IMR-90 (cell line): ENCODE measurements at regions of chr14 and their contacts with region 1.

Region 1: GRCh38 chr14:60980811-60981632 is at the starts of genes SLC38A6 and TRMT5:
- DNase-seq: peak; percentile 97
- ATAC-seq: peak; percentile 95
- H3K4me3 ChIP-seq: peak within 1 kb of the TSS; percentile 83
- H3K27ac ChIP-seq: peak within 1 kb of the TSS; percentile 89
- H3K4me1 ChIP-seq: no peaks in the 10 kb centered on the region; the same call in 1 of the 2 replicates
- H3K27me3 ChIP-seq: no peaks in the 10 kb centered on the region
- CTCF ChIP-seq: no peak
- POLR2A ChIP-seq: peak; percentile 83
- RAD21 ChIP-seq: peak; percentile 28
- total RNA-seq, gene SLC38A6: 18.3 and 38.9 TPM in 2 replicates
- total RNA-seq, gene TRMT5: 10.4 and 15.6 TPM in 2 replicates

Region 2: DNA sequence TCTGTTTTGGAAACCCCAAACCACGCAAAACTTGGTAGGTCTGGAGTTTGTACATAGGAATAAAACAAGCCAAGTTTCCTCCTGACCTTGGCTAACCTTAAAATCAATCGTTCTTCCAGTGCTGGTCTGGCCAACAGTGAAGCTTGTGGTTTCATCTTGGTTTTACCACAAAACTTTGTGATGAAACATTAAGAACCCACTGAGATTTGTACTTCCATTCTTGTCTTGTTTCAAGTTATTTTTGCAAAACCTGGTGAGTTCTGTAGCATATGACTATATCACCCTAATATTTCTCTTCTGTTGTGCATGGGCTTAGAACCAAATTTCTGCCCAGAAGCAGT is 358.1 kb before region 1 on chr14:
- CTCF ChIA-PET with region 1: no interaction called
- POLR2A ChIA-PET with region 1: no interaction called
- dilution Hi-C with region 1: no loop called
- in situ Hi-C with region 1: loop called (anchors 25 kb)
- intact Hi-C with region 1: loop called (anchors 2 kb)
- DNase-seq: peak; percentile 70
- ATAC-seq: no peak
- H3K4me3 ChIP-seq: no peak overlapping the region
- H3K27ac ChIP-seq: peak overlapping the region; percentile 53; the same call in 1 of the 2 replicates
- H3K4me1 ChIP-seq: peaks cover 8% of the 10 kb centered on the region
- H3K27me3 ChIP-seq: no peaks in the 10 kb centered on the region
- CTCF ChIP-seq: no peak
- POLR2A ChIP-seq: no peak
- RAD21 ChIP-seq: no peak

Region 3: GRCh38 chr14:60724137-60724619 is 256.8 kb before region 1 on chr14 and contains the start of gene SIX4:
- CTCF ChIA-PET with region 1: interaction called, 3 read pairs
- POLR2A ChIA-PET with region 1: interaction called, 5 read pairs
- dilution Hi-C with region 1: no loop called
- in situ Hi-C with region 1: loop called (anchors 5 kb)
- intact Hi-C with region 1: loop called (anchors 1 kb)
- DNase-seq: peak; percentile 92
- ATAC-seq: peak; percentile 81
- H3K4me3 ChIP-seq: peak within 1 kb of the TSS; percentile 71
- H3K27ac ChIP-seq: peak within 1 kb of the TSS; percentile 78
- H3K4me1 ChIP-seq: peaks cover 10% of the 10 kb centered on the region
- H3K27me3 ChIP-seq: no peaks in the 10 kb centered on the region
- CTCF ChIP-seq: no peak
- POLR2A ChIP-seq: peak; percentile 82
- RAD21 ChIP-seq: peak; percentile 6; the same call in 1 of the 2 replicates
- total RNA-seq, gene SIX4: 28.1 and 42.7 TPM in 2 replicates

Region 4: DNA sequence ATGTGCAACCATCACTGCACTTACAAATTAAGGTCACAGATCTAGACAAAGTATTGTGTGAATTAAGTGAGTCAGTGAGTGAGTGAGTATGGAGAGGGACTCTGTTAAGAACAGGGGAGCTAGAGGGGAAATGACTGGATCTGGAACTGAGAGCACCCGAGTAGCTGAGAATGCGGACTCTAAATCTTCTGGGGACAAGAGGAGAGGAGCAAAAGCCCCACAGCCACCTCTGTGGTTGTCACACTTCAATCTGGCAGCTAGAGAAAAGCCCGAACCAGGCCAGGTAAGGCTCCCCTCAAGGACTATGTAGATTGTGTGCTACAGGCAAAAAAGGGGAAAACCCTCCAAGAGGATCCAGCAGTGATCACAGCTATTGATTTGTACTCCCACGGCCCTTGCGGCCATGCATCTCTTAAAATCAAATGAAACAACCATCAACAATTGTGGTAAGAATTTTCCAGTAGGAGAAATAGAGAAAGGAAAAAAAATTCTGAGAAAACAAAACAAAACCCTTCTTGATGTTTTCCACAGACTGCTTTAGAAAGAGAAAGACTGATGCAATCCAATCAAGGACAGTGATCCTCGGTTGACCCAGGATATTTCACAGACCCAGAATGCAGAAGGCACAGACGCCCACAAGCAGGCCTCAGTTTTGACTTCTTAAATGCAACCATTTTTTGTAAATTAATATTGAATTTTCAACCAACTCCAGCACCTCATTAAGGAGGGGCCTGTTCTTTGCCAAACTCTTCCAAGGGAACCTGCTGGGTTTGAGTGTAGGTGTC is 109.6 kb after region 1 on chr14:
- CTCF ChIA-PET with region 1: no interaction called
- POLR2A ChIA-PET with region 1: no interaction called
- dilution Hi-C with region 1: no loop called
- in situ Hi-C with region 1: no loop called
- intact Hi-C with region 1: no loop called
- DNase-seq: peak; percentile 48
- ATAC-seq: peak; percentile 70
- H3K4me3 ChIP-seq: no peak overlapping the region
- H3K27ac ChIP-seq: peak overlapping the region; percentile 57; the same call in 1 of the 2 replicates
- H3K4me1 ChIP-seq: peaks cover 15% of the 10 kb centered on the region
- H3K27me3 ChIP-seq: no peaks in the 10 kb centered on the region
- CTCF ChIP-seq: no peak
- POLR2A ChIP-seq: no peak
- RAD21 ChIP-seq: no peak

Region 5: DNA sequence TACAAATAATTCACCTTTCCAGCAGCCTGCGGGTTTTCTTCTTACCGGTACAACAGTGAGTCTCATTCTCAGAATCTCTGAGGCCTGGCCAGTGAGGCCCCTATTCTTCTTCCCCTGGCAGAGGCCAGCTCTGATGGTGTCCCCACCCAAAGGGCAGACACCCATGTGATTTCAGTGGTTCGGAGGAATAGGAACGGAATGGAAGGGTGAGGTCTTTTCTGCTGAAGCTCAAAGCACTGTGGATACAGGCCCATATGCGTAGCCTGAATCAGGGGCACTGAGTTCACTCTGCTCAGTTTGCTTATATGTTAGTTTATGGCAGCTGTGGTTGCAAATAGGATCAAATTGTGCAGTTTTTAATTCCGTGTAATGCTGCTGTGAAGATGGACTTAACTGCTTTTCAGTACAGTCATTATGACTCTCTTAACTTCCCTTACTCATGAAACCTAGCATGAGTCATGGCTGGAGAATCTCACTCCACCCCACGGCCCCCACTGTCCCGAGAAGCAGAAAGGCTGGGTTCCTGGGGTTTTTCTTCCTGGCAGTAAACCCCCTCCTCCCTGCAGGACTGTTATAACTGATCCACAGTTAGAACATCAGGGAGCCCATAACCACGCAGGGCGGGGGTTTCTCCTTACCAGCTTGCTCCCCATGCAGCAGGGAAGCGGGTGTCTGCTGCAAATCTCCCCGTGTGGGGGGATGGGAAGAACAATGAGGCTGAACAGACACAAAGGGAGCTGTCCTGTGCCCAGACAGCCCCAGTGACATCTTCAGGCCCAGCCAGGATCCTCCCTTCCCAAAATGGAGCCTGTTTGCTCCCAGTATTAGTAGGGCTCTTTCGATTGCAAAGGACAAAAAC is 122.7 kb after region 1 on chr14:
- CTCF ChIA-PET with region 1: no interaction called
- POLR2A ChIA-PET with region 1: no interaction called
- dilution Hi-C with region 1: no loop called
- in situ Hi-C with region 1: no loop called
- intact Hi-C with region 1: loop called (anchors 5 kb)
- DNase-seq: peak; percentile 99
- ATAC-seq: peak; percentile 88
- H3K4me3 ChIP-seq: no peak overlapping the region
- H3K27ac ChIP-seq: peak overlapping the region; percentile 95
- H3K4me1 ChIP-seq: peaks cover 42% of the 10 kb centered on the region
- H3K27me3 ChIP-seq: no peaks in the 10 kb centered on the region
- CTCF ChIP-seq: no peak
- POLR2A ChIP-seq: no peak
- RAD21 ChIP-seq: no peak

Region 6: DNA sequence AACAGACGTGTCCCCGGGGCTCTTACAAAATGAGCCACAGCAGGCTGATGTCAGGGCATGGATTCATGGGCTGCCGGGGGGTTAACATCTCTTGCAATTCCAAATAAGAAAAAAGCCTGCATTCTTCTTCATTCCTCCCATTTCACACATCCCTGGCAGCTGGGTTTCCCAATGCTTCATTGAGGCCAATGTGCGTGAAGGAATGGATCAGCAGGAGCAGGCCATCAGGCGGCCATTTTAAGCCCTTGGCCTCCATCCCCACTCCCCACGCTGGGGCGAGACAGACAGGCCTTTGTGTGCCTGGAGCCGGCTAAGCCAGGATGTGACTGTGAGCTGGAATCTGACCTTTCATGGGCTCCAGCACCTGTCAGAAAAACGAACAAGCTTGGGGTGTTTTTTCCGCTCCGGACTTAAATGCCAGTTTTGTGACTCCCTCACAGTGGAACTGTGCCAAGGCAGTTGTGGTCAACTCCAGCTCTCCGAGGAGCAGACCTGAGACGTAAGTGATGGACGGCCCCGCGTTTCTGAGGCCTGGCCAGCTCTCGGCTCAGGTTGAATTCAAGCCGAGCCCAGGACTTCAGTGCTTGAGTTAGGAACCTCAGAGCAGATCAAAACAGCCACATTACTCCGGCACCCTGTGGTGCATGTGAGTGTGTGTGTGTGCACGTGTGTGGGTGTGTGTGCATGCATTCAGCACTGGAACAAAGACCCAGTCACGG is 167.0 kb after region 1 on chr14:
- CTCF ChIA-PET with region 1: no interaction called
- POLR2A ChIA-PET with region 1: interaction called, 3 read pairs
- dilution Hi-C with region 1: no loop called
- in situ Hi-C with region 1: no loop called
- intact Hi-C with region 1: loop called (anchors 2 kb)
- DNase-seq: peak; percentile 100
- ATAC-seq: peak; percentile 60
- H3K4me3 ChIP-seq: no peak overlapping the region
- H3K27ac ChIP-seq: peak overlapping the region; percentile 99
- H3K4me1 ChIP-seq: peaks cover 36% of the 10 kb centered on the region
- H3K27me3 ChIP-seq: no peaks in the 10 kb centered on the region
- CTCF ChIP-seq: no peak
- POLR2A ChIP-seq: peak; percentile 22; the same call in 1 of the 2 replicates
- RAD21 ChIP-seq: no peak

Region 7: GRCh38 chr14:61258985-61259384 is 278.0 kb after region 1 on chr14:
- CTCF ChIA-PET with region 1: no interaction called
- POLR2A ChIA-PET with region 1: no interaction called
- dilution Hi-C with region 1: no loop called
- in situ Hi-C with region 1: loop called (anchors 5 kb)
- intact Hi-C with region 1: no loop called
- DNase-seq: peak; percentile 21
- ATAC-seq: peak; percentile 48
- H3K4me3 ChIP-seq: no peak overlapping the region
- H3K27ac ChIP-seq: no peak overlapping the region
- H3K4me1 ChIP-seq: peaks cover 10% of the 10 kb centered on the region
- H3K27me3 ChIP-seq: no peaks in the 10 kb centered on the region
- CTCF ChIP-seq: no peak
- POLR2A ChIP-seq: no peak
- RAD21 ChIP-seq: no peak